Activated CD4-positive, alpha-beta T cell treated with anti-CD3 and anti-CD28 coated beads, Interleukin-2, amount 10 ng/mL, durations not matched to agents 24 days and 14 days (primary cell): ENCODE measurements at regions of chr10 and their contacts with region 1.

Region 1: DNA sequence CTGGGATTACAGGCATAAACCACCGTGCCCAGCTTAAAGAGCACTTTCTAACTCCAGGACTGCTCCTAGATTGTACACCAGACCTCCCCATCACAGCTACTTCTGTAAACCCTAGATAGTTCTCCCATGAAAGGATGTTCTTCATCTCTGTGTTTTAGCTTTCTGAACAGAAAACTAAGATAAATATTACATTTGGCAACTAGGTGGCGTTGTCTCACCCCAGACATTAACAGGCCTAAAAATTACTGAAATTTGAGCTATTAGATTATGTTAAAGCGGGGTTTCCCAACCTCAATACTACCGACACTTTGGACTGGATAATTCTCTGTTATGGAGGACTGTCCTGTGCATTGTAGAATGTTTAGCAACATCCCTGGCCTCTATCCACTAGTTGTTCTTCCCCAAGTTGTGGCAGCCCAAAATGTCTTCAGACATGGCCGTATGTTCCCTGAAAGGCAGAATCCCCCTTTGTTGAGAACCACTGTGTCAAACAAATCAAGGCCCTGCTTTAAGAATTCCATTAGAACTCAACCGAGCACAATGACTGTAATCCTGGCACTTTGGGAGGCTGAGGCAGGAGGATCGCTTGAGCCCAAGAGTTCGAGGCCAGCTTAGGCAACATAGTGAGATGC is 19.1 kb downstream of the ATOH7 start:
- DNase-seq: peak; percentile 62
- H3K4me3 Mint-ChIP-seq: no peak overlapping the region
- H3K27ac Mint-ChIP-seq: no peak overlapping the region
- H3K4me1 Mint-ChIP-seq: no peaks in the 10 kb centered on the region
- H3K27me3 Mint-ChIP-seq: peaks cover 15% of the 10 kb centered on the region

Region 2: GRCh38 chr10:68082872-68083271 is 130.0 kb before region 1 on chr10:
- intact Hi-C with region 1: no loop called
- DNase-seq: no peak
- H3K4me3 Mint-ChIP-seq: no peak overlapping the region
- H3K27ac Mint-ChIP-seq: no peak overlapping the region
- H3K4me1 Mint-ChIP-seq: peaks cover 5% of the 10 kb centered on the region
- H3K27me3 Mint-ChIP-seq: peaks cover 13% of the 10 kb centered on the region

Region 3: GRCh38 chr10:68156373-68157185 is 56.3 kb before region 1 on chr10:
- intact Hi-C with region 1: no loop called
- DNase-seq: peak; percentile 88
- H3K4me3 Mint-ChIP-seq: no peak overlapping the region
- H3K27ac Mint-ChIP-seq: no peak overlapping the region
- H3K4me1 Mint-ChIP-seq: peaks cover 3% of the 10 kb centered on the region
- H3K27me3 Mint-ChIP-seq: no peaks in the 10 kb centered on the region

Region 4: DNA sequence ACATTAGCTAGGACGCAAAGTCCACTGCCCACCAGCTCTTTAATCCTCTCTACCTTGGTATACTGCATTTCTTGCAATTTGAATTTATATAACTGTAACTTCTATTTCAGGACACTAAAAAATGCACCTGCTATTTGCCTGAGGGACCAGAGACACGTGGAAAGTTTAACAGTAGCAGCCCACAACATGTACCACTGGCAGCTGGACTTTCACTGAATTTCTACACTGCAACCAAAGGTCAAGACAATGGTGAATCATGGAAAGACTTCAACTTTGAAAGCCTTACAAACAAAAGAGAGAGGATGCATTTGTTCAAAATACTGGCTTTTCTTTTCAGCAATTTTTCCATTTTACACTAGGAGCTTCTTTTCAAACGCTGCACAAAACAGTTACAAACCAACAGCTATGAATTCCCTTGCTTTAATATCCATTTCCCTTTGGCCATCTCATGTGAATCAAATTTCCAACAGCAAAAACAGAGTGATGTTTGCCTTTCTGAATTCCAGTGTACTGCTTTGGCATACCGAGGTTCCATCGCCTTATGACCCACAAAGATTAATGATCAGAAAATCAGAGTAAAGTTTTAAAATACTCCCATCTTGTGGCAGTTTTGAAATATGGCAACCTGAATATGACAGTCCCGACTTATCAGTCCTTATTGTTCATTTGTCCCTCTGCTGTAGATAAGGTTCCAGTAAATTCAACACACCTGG is 89.1 kb after region 1 on chr10:
- intact Hi-C with region 1: loop called (anchors 5 kb)
- DNase-seq: no peak
- H3K4me3 Mint-ChIP-seq: no peak overlapping the region
- H3K27ac Mint-ChIP-seq: no peak overlapping the region
- H3K4me1 Mint-ChIP-seq: no peaks in the 10 kb centered on the region
- H3K27me3 Mint-ChIP-seq: no peaks in the 10 kb centered on the region

Region 5: DNA sequence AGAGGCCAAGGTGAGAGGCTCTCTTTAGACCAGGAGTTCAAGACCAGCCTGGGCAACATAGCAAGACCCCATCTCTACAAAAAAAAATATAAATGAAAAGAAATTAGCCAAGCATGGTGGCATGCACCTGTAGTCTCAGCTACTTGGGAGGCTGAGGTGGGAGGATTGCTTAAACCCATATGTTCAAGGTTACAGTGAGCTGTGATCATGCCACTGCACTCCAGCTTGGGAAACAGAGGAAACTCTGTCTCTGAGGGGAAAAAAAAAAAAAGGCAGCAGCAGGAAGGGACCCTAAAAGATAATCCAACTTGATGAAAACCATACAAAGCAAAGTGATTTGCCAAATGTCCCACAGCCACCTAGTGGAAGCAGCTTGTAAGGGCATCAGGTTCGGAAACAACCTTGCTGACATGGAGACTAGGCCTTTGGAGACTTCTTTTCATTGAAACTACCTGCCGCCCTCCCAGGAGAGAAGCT is 135.5 kb after region 1 on chr10:
- intact Hi-C with region 1: loop called (anchors 2 kb)
- DNase-seq: peak; percentile 82
- H3K4me3 Mint-ChIP-seq: no peak overlapping the region
- H3K27ac Mint-ChIP-seq: peak overlapping the region; percentile 59
- H3K4me1 Mint-ChIP-seq: peaks cover 8% of the 10 kb centered on the region
- H3K27me3 Mint-ChIP-seq: no peaks in the 10 kb centered on the region